ENCODE measurements at regions of chr15 and their contacts with region 1.

Region 1: GRCh38 chr15:83153288-83153687 is 45.8 kb downstream of the TM6SF1 start:
- DNase-seq: no peak
- H3K4me3 ChIP-seq: no peak overlapping the region
- H3K27ac ChIP-seq: no peak overlapping the region
- H3K4me1 ChIP-seq: no peaks in the 10 kb centered on the region
- H3K27me3 ChIP-seq: no peaks in the 10 kb centered on the region
- CTCF ChIP-seq: no peak
- POLR2A ChIP-seq: no peak

Region 2: GRCh38 chr15:83243634-83244033 is 90.3 kb after region 1 on chr15:
- intact Hi-C with region 1: loop called (anchors 5 kb)
- DNase-seq: no peak
- H3K4me3 ChIP-seq: no peak overlapping the region
- H3K27ac ChIP-seq: no peak overlapping the region
- H3K4me1 ChIP-seq: no peaks in the 10 kb centered on the region
- H3K27me3 ChIP-seq: peaks cover 0 to 9% of the 10 kb centered on the region in 2 donors
- CTCF ChIP-seq: no peak
- POLR2A ChIP-seq: no peak

Measured in breast epithelium (tissue), 4 donors.